Heart left ventricle (tissue), 16 donors: ENCODE measurements at regions of chr18 and their contacts with region 1.

Region 1: GRCh38 chr18:1082497-1082896 is 177.8 kb downstream of the ADCYAP1 start:
- DNase-seq: no peak
- ATAC-seq: no peak
- H3K4me3 ChIP-seq: no peak overlapping the region
- H3K27ac ChIP-seq: no peak overlapping the region
- H3K4me1 ChIP-seq: no peaks in the 10 kb centered on the region
- H3K27me3 ChIP-seq: no peaks in the 10 kb centered on the region
- CTCF ChIP-seq: no peak
- POLR2A ChIP-seq: no peak

Region 2: GRCh38 chr18:1037776-1038175 is 44.7 kb before region 1 on chr18:
- intact Hi-C with region 1: no loop called
- DNase-seq: no peak
- ATAC-seq: no peak
- H3K4me3 ChIP-seq: no peak overlapping the region
- H3K27ac ChIP-seq: no peak overlapping the region
- H3K4me1 ChIP-seq: no peaks in the 10 kb centered on the region
- H3K27me3 ChIP-seq: no peaks in the 10 kb centered on the region
- CTCF ChIP-seq: no peak
- POLR2A ChIP-seq: no peak

Region 3: GRCh38 chr18:1133541-1133940 is 51.0 kb after region 1 on chr18:
- intact Hi-C with region 1: no loop called
- DNase-seq: no peak
- ATAC-seq: no peak
- H3K4me3 ChIP-seq: no peak overlapping the region
- H3K27ac ChIP-seq: no peak overlapping the region
- H3K4me1 ChIP-seq: no peaks in the 10 kb centered on the region
- H3K27me3 ChIP-seq: no peaks in the 10 kb centered on the region
- CTCF ChIP-seq: no peak
- POLR2A ChIP-seq: no peak

Region 4: DNA sequence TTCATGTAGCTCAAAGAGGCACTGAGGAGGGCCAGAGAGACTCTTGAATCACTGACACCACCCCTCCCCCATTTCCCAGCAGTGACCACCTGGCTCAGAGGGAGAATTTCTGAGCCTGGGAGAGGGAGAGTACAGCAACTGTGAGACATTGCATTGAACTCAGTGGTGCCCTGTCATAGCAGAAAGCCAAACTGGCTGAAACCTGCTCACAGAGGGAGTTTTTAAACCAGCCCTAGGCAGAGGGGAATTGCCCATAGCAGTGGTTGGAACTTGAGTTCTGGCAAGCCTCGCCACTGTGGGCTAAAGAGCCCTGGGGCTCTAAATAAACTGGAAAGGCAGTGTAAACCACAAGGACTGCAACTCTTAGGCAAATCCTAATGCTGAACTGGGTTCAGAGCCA is 65.2 kb after region 1 on chr18:
- intact Hi-C with region 1: loop called in 1 of 10 experiments (anchors 10 kb)
- DNase-seq: no peak
- ATAC-seq: no peak
- H3K4me3 ChIP-seq: no peak overlapping the region
- H3K27ac ChIP-seq: no peak overlapping the region
- H3K4me1 ChIP-seq: no peaks in the 10 kb centered on the region
- H3K27me3 ChIP-seq: no peaks in the 10 kb centered on the region
- CTCF ChIP-seq: no peak
- POLR2A ChIP-seq: no peak